ENCODE measurements at regions of chr7 and their contacts with region 1.

Region 1: DNA sequence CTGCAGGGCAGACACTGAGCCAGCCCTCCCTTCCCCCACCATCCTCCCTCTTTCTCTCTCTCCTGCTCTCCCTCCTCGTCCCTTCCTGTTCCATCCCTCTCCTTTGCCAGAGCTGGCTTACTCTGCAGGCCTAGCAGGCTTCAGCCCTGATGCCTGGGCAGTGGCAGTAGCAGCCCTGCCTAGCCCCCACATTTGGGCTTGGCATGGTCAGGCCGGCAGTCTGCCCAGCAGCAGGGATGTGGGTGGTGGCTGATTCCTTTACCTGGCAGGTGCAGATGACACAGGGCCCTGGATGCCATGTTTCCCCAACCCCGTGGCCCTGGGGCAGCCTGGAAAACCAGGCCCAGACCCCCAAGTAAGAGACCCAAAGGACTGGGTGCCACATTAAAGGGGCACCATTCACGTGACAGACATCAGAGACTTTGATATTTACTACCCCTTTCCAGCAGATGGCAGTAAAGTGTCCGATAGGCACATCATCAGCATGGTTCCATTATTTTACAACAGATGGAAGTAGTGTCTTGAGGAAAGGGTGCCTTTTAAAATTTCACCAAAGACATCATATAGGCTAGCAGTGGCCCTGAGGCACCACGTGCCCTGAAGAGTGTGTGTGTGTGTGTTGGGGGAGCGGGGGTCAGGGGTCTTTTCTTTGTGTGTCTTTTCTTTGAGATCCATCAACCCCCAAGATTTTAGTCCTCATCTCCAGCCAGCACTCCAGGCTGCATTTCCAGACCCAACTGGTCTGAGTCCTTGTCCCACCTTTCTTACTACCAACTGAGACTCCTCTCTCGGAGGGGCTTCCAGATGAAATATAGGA is 5.9 kb downstream of the KCP start:
- DNase-seq: peak; percentile 40
- H3K4me3 ChIP-seq: no peak overlapping the region
- H3K27ac ChIP-seq: no peak overlapping the region
- H3K27me3 ChIP-seq: peaks cover under 1% of the 10 kb centered on the region
- CTCF ChIP-seq: peak; percentile 67

Region 2: GRCh38 chr7:129091484-129092002 is 187.0 kb after region 1 on chr7:
- in situ Hi-C with region 1: loop called (anchors 25 kb)
- DNase-seq: peak; percentile 76
- H3K4me3 ChIP-seq: no peak overlapping the region
- H3K27ac ChIP-seq: no peak overlapping the region
- H3K27me3 ChIP-seq: no peaks in the 10 kb centered on the region
- CTCF ChIP-seq: peak; percentile 99

Measured in brain microvascular endothelial cell (primary cell).